PC-3 (cell line): ENCODE measurements at regions of chr6 and their contacts with region 1.

Region 1: DNA sequence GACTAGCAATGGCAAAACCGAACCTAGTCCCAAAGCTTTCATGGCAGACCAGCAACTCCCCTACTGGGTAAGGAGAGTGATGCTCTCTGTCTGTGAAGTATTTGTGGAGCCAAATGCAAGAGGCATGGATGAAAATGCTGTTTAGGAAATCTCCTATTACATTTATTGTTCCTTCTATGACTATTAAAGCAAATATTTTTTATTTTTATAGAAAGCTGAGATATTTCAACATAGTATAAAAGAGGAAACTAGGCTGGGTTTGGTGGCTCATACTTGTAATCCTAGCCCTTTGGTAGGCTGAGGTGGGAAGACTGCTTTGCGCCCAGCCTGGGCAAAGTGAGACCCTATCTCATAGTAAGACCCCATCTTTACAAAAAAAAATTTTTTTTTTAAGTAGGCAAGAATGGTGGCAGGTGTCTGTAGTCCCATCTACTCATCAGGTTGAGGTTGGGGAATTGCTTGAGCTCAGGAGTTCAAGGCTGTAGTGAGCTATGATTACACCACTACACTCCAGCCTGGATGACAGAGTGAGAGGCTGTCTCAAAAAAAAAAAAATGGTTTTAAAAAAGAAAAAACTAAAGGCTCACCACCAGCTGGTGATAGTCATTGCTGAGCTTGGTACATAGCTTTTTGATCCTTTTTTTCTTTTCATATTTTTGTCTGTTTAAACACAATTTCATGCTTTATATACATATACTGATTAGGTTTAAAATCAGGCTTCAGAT is 11.3 kb downstream of the KDM1B start:
- DNase-seq: peak; percentile 45
- ATAC-seq: peak; percentile 96
- H3K4me3 ChIP-seq: no peak overlapping the region
- H3K27ac ChIP-seq: peak overlapping the region; percentile 38
- H3K4me1 ChIP-seq: peaks cover 11% of the 10 kb centered on the region
- H3K27me3 ChIP-seq: no peaks in the 10 kb centered on the region
- CTCF ChIP-seq: no peak

Region 2: DNA sequence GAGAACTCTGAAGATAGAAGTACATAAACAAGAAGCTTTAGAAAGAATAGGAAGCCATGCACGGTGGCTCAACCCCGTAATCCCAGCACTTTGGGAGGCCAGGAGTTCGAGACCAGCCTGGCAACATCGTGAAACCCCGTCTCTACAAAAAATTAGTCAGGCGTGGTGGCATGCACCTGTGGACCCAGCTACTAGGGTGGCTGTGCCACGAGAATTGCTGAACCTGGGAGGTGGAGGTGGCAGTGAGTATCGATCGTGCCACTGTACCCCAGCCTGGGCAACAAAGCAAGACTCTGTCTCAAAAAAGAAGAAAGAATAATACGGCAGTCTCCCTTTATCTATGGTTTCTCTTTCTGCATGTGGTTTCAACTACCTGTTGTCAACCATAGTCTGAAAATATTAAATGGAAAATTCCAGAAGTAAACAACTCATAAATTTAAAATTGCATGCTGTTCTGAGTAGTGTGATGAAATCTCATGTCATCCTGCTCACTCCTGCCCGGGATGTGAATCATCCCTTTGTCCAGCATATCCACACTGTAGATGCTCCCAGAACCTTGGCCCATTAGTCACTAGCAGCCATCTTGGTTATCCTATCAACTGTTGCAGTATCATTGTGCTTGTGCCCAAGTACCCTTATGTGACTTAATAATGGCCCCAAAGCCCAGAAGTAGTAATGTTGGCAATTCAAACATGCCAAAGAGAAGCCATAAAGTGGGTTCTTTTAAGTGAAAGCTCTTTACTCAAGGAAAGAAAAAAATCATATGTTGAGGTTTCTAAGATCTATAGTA is 75.8 kb after region 1 on chr6:
- CTCF ChIA-PET with region 1: no interaction called
- POLR2A ChIA-PET with region 1: interaction called, 10 read pairs
- intact Hi-C with region 1: no loop called
- DNase-seq: peak; percentile 88
- ATAC-seq: peak; percentile 84
- H3K4me3 ChIP-seq: no peak overlapping the region
- H3K27ac ChIP-seq: peak overlapping the region; percentile 74
- H3K4me1 ChIP-seq: peaks cover 39% of the 10 kb centered on the region
- H3K27me3 ChIP-seq: no peaks in the 10 kb centered on the region
- CTCF ChIP-seq: no peak